Activated naive CD4-positive, alpha-beta T cell treated with anti-CD3 and anti-CD28 coated beads for 36 hours (primary cell): ENCODE measurements at regions of chr3 and their contacts with region 1.

Region 1: DNA sequence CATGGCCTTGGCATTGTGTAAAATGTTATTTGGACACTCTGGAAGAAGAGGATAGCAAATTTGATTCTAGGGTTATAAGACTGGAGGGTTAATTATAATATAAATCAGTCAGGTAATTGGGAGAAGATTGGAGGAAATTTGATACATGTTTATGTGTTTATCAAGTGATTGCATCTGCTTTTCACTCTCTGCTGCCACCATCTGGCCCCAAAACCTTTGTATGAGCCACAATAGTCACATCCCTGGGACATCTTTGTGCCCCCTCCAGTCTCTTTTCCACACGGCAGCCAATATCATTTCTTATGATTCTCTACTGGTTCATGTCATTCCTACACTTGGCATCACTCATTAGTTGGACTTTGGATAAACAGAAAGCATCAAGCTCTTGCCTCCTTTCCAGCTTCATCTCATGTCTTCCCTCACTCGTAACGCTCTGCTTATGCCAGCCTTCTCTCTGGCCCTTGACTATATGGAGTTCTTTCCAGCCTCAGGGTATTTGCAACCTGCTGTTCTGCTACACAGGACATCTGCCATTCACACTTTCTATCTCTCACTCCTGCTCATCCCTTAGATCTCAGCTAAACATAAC is 602.3 kb upstream of the SUCLG2 start:
- DNase-seq: peak; percentile 47
- H3K4me3 Mint-ChIP-seq: no peak overlapping the region
- H3K27ac Mint-ChIP-seq: no peak overlapping the region
- H3K4me1 Mint-ChIP-seq: no peaks in the 10 kb centered on the region
- H3K27me3 Mint-ChIP-seq: no peaks in the 10 kb centered on the region

Region 2: GRCh38 chr3:67819447-67819846 is 437.3 kb before region 1 on chr3:
- CTCF ChIA-PET with region 1: no interaction called
- intact Hi-C with region 1: loop called (anchors 1 kb)
- DNase-seq: peak; percentile 37
- H3K4me3 Mint-ChIP-seq: no peak overlapping the region
- H3K27ac Mint-ChIP-seq: no peak overlapping the region
- H3K4me1 Mint-ChIP-seq: peaks cover 2% of the 10 kb centered on the region
- H3K27me3 Mint-ChIP-seq: no peaks in the 10 kb centered on the region

Region 3: GRCh38 chr3:67901681-67902080 is 355.0 kb before region 1 on chr3:
- CTCF ChIA-PET with region 1: no interaction called
- intact Hi-C with region 1: loop called (anchors 1 kb)
- DNase-seq: peak; percentile 12
- H3K4me3 Mint-ChIP-seq: no peak overlapping the region
- H3K27ac Mint-ChIP-seq: no peak overlapping the region
- H3K4me1 Mint-ChIP-seq: peaks cover 12% of the 10 kb centered on the region
- H3K27me3 Mint-ChIP-seq: no peaks in the 10 kb centered on the region

Region 4: DNA sequence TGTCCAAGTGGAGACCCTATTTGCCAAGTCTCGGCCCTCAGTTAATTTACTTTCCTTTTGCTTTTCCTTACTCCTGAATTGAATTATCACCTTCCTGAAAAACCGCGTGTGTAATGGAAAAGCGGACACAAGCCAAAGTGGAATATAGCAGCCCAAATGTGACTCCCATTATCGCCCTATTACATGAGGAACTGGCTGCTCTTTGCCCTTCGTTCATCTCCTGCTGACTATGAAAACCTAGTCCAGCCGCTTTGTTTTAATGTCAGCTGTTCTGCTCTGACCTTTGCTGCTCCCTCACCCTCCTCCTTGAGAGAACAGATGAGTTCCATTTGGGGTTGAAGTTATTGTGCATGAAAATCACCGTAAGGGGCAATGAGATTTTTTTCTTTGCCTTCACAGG is 30.4 kb after region 1 on chr3:
- CTCF ChIA-PET with region 1: no interaction called
- intact Hi-C with region 1: no loop called
- DNase-seq: no peak
- H3K4me3 Mint-ChIP-seq: no peak overlapping the region
- H3K27ac Mint-ChIP-seq: no peak overlapping the region
- H3K4me1 Mint-ChIP-seq: no peaks in the 10 kb centered on the region
- H3K27me3 Mint-ChIP-seq: no peaks in the 10 kb centered on the region